GM10248 (cell line): ENCODE measurements at regions of chr16 and their contacts with region 1.

Region 1: DNA sequence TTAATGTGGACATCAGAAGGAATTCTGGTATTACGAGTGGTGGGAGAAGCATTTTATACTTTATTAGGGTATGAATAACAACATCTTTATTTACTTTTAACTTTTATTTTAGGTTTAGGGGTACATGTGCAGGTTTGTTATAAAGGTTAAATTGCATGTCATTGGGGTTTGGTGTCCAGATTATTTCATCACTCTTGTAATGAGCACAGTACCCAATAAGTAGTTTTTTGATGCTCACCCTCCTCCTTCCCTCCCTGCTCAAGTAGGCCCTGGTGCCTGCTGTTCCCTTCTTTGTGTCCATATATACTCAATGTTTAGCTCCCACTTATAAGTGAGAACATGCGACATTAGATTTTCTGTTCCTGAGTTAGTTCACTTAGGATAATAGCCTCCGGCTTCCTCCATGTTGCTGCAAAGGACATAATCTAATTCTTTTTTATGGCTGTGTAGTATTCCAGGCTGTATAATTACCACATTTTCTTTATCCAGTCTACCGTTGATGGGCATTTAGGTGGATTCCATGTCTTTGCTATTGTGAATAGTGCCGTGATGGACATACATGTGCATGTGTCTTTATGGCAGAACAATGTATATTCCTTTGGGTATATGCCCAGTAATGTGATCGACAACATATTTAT is 456.2 kb downstream of the XYLT1 start:
- DNase-seq: no peak
- CTCF ChIP-seq: no peak

Region 2: DNA sequence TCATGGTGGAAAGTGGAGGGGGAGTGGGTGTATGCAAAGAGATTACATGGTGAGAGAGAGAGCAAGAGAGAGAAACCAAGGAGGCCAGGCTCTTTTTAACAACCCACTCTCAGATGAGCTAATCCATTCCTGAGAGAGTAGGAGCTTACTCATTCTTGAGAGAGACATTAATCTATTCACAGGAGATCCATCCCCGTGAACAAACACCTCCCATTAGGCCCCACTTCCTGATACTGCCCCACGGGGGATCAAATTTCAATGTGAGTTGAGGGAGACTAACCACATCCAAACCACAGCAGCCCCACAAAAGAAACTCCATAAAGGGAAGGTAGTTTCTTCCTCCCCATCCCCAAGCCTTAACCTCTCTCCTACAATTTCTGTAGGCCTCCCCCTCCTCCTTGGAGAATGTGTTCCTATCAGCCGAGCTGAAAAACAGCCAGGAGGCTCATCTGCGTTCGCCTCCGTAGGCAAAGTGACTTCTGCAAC is 185.6 kb before region 1 on chr16:
- CTCF ChIA-PET with region 1: no interaction called
- POLR2A ChIA-PET with region 1: no interaction called
- DNase-seq: no peak
- CTCF ChIP-seq: no peak

Region 3: GRCh38 chr16:17026600-17027242 is 12.1 kb after region 1 on chr16:
- CTCF ChIA-PET with region 1: interaction called, 8 read pairs
- POLR2A ChIA-PET with region 1: interaction called, 12 read pairs
- DNase-seq: peak; percentile 31
- CTCF ChIP-seq: no peak

Region 4: DNA sequence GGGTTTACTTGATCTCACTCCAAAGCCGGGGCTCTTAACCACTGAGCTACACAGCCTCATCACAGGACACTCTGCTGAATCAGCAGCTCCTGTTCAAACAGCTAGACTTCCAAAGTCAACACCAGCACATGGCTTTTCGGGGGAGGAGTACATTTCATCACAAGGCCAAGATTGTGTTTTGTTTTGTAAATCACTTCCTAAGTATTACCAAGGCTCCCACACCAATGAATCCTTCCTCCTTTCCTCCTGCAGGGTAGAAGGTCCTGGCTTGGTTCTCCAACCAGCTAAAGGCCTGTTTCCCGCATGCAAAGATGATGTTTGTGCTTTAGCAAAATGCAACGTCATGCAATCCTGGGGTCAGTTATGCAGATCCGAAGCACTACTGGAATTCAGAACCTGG is 303.6 kb after region 1 on chr16:
- CTCF ChIA-PET with region 1: no interaction called
- POLR2A ChIA-PET with region 1: no interaction called
- DNase-seq: no peak
- CTCF ChIP-seq: no peak